CD4-positive, alpha-beta T cell (primary cell): ENCODE measurements at regions of chr2 and their contacts with region 1.

Region 1: DNA sequence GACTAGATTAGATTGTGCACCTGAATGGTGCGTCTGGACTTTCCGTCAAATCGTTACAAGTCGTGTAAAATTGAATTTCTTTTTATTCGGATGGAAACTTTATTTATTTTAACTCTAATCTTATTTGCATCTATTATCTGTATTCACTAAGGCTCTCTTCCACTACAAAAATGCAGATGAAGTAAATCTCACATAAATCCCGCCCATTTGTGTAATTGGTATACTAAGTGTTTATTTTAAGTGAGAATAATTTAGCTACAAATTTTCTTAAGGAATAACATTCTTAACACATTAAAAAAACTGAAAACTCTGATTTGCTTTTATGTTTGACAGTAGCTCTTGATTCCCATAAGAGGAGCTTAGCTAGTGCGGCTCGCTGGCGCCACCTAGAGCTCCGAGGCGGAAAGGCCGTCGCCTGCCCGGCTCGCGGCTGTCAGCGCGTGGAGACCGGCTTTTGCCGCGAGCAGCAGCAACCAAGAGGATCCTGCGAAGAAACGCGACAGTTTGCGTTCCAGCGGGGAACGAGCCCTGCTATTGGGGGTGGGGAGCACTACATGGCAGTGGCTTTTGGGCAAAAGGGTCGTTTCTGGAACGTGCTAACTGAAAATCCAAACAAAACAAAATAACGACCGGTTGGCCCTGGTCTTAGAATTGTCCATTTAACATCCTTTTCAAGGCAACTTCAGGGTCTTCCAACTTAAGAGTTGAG is 6.7 kb downstream of the SP9 start:
- DNase-seq: peak; percentile 80 to 92 (median 87)
- ATAC-seq: peak; percentile 78
- H3K4me3 ChIP-seq: no peak overlapping the region
- H3K4me3 Mint-ChIP-seq: peak overlapping the region; percentile 87
- H3K27ac ChIP-seq: no peak overlapping the region
- H3K27ac Mint-ChIP-seq: peak overlapping the region; percentile 63
- H3K4me1 ChIP-seq: peaks cover 55% of the 10 kb centered on the region
- H3K4me1 Mint-ChIP-seq: peaks cover 46% of the 10 kb centered on the region
- H3K27me3 ChIP-seq: peaks cover 60 to 87% of the 10 kb centered on the region in 2 experiments
- H3K27me3 Mint-ChIP-seq: peaks cover 82% of the 10 kb centered on the region
- CTCF ChIP-seq: peak; percentile 98

Region 2: GRCh38 chr2:173027181-173028128 is 1314.0 kb before region 1 on chr2:
- CTCF ChIA-PET with region 1: interaction called, 4 read pairs
- POLR2A ChIA-PET with region 1: no interaction called
- intact Hi-C with region 1: loop called (anchors 1 to 2 kb)
- DNase-seq: peak; percentile 41 to 88 (median 62)
- ATAC-seq: peak; percentile 86
- H3K4me3 ChIP-seq: no peak overlapping the region
- H3K4me3 Mint-ChIP-seq: no peak overlapping the region
- H3K27ac ChIP-seq: no peak overlapping the region
- H3K27ac Mint-ChIP-seq: no peak overlapping the region
- H3K4me1 ChIP-seq: no peaks in the 10 kb centered on the region
- H3K4me1 Mint-ChIP-seq: no peaks in the 10 kb centered on the region
- H3K27me3 ChIP-seq: no peaks in the 10 kb centered on the region
- H3K27me3 Mint-ChIP-seq: peaks cover 6% of the 10 kb centered on the region
- CTCF ChIP-seq: peak; percentile 96

Region 3: GRCh38 chr2:173402405-173402974 is 939.0 kb before region 1 on chr2:
- CTCF ChIA-PET with region 1: interaction called, 13 read pairs
- POLR2A ChIA-PET with region 1: interaction called, 6 read pairs
- intact Hi-C with region 1: loop called (anchors 1 kb)
- DNase-seq: peak; percentile 49 to 83 (median 63)
- ATAC-seq: peak; percentile 74
- H3K4me3 ChIP-seq: no peak overlapping the region
- H3K4me3 Mint-ChIP-seq: no peak overlapping the region
- H3K27ac ChIP-seq: no peak overlapping the region
- H3K27ac Mint-ChIP-seq: no peak overlapping the region
- H3K4me1 ChIP-seq: peaks cover 5% of the 10 kb centered on the region
- H3K4me1 Mint-ChIP-seq: peaks cover 5% of the 10 kb centered on the region
- H3K27me3 ChIP-seq: peaks cover 22 to 61% of the 10 kb centered on the region in 2 experiments
- H3K27me3 Mint-ChIP-seq: peaks cover 67% of the 10 kb centered on the region
- CTCF ChIP-seq: peak; percentile 87

Region 4: GRCh38 chr2:173884025-173884802 is 457.2 kb before region 1 on chr2:
- CTCF ChIA-PET with region 1: no interaction called
- POLR2A ChIA-PET with region 1: no interaction called
- intact Hi-C with region 1: loop called (anchors 1 to 2 kb)
- DNase-seq: peak in 12 of 14 experiments; percentile 3 to 59 (median 25)
- ATAC-seq: no peak
- H3K4me3 ChIP-seq: no peak overlapping the region
- H3K4me3 Mint-ChIP-seq: no peak overlapping the region
- H3K27ac ChIP-seq: no peak overlapping the region
- H3K27ac Mint-ChIP-seq: no peak overlapping the region
- H3K4me1 ChIP-seq: no peaks in the 10 kb centered on the region
- H3K4me1 Mint-ChIP-seq: no peaks in the 10 kb centered on the region
- H3K27me3 ChIP-seq: peaks cover 0 to 6% of the 10 kb centered on the region in 2 experiments
- H3K27me3 Mint-ChIP-seq: peaks cover 39% of the 10 kb centered on the region
- CTCF ChIP-seq: peak; percentile 50

Region 5: GRCh38 chr2:174039551-174040416 is 301.7 kb before region 1 on chr2:
- CTCF ChIA-PET with region 1: no interaction called
- POLR2A ChIA-PET with region 1: no interaction called
- intact Hi-C with region 1: loop called in 1 of 2 experiments (anchors 10 kb)
- DNase-seq: peak; percentile 65 to 93 (median 78)
- ATAC-seq: peak; percentile 95
- H3K4me3 ChIP-seq: peak overlapping the region; percentile 44
- H3K4me3 Mint-ChIP-seq: peak overlapping the region; percentile 49
- H3K27ac ChIP-seq: peak overlapping the region; percentile 76 to 78
- H3K27ac Mint-ChIP-seq: peak overlapping the region; percentile 79
- H3K4me1 ChIP-seq: peaks cover 9% of the 10 kb centered on the region
- H3K4me1 Mint-ChIP-seq: peaks cover 9% of the 10 kb centered on the region
- H3K27me3 ChIP-seq: no peaks in the 10 kb centered on the region
- H3K27me3 Mint-ChIP-seq: peaks cover 6% of the 10 kb centered on the region
- CTCF ChIP-seq: peak; percentile 82

Region 6: DNA sequence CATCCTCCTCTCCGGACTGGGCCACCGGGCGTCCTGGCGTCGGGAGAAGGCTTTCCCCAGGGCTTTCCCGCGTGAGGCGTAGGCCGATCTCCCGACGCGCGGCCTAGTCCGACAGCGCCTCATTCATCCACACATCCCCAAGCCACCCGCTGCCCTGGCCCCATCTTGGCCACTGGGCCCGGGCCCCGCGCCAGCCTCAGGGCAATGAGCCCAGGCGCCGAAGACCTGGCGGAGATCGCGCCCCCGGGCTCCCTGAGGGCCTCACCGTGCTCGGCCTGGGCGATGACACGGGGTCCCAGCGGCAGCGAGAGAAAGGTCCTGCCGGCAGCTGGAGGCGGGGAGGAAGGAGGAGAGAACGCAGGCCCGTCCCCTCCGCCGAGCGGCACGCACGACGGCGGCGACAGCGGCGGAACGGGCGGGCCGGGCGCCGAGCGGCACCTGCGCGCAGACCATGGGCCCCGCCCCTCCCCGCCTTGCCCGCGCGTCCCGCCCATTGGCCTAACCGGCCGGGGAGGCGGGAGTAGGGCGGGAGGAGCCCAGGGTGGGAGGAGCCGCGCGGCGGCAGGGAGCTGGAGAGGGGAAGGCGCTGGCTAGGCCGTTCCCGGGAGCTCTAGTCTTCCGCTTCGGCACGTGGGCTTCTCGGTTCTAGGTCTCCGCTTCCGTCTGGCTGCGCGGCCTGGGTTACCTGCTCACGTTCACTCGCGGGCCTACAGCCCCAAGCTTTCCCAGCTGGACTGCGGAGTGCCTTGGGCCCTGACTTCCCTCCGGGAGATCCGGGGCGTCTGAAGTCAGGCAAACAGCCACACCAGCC is 93.0 kb before region 1 on chr2 and contains the start of gene OLA1:
- CTCF ChIA-PET with region 1: no interaction called
- POLR2A ChIA-PET with region 1: interaction called, 3 read pairs
- intact Hi-C with region 1: loop called (anchors 5 kb)
- DNase-seq: peak; percentile 89 to 98 (median 95)
- ATAC-seq: peak; percentile 97
- H3K4me3 ChIP-seq: peak within 1 kb of the TSS; percentile 79
- H3K4me3 Mint-ChIP-seq: peak within 1 kb of the TSS; percentile 90
- H3K27ac ChIP-seq: peak within 1 kb of the TSS; percentile 47 to 65
- H3K27ac Mint-ChIP-seq: peak within 1 kb of the TSS; percentile 73
- H3K4me1 ChIP-seq: peaks cover 21% of the 10 kb centered on the region
- H3K4me1 Mint-ChIP-seq: peaks cover 39% of the 10 kb centered on the region
- H3K27me3 ChIP-seq: no peaks in the 10 kb centered on the region
- H3K27me3 Mint-ChIP-seq: no peaks in the 10 kb centered on the region
- CTCF ChIP-seq: no peak
- total RNA-seq, gene OLA1: 38.1 to 40.5 TPM

Region 7: DNA sequence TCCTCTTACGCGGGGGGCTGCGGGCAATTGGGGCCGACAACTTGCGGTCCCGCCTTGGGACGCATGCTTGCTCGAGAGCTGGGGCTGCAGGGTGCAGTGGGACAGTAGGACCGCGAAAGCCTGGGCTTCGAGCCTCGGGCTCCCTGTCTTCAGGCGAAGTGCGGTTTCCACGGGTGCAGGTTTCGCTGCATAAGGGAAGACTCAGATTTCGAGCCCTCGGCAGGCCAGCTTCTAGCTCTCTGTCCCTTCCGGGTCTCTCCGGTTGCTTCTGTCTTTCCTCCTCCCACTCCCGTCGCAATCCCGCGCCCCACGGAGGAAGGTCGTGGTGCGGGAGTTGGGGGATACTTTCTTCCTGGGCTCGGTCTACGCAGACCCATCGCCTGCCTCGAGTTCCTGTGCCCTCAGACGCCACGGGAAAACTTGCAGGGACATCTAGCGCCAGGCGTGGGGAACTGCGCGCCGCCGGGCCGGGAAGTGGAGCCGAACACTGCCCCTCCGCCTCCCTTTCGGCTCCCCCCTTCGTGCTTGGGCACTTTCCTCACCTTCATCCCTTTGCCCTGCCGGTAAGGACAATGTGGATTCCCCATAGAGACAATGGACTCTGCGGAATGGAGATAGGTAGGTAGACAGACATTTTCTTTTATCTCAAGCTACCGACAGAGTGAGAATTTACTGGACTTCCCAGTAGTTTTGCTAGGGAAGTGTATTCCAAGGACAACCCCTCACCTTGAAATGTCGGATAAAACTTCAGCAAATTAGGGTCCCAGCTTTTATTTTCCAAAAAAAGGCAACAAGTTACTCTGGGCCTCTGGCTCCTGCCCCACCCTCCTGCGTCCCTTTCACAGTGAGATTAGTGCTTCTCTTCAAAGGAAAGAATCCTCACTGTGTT is 1746.9 kb after region 1 on chr2:
- CTCF ChIA-PET with region 1: no interaction called
- POLR2A ChIA-PET with region 1: interaction called, 3 read pairs
- intact Hi-C with region 1: loop called (anchors 5 to 10 kb)
- DNase-seq: peak in 5 of 14 experiments; percentile 23 to 56 (median 34)
- ATAC-seq: no peak
- H3K4me3 ChIP-seq: no peak overlapping the region
- H3K4me3 Mint-ChIP-seq: peak overlapping the region; percentile 72
- H3K27ac ChIP-seq: no peak overlapping the region
- H3K27ac Mint-ChIP-seq: peak overlapping the region; percentile 47
- H3K4me1 ChIP-seq: peaks cover 31% of the 10 kb centered on the region
- H3K4me1 Mint-ChIP-seq: peaks cover 36% of the 10 kb centered on the region
- H3K27me3 ChIP-seq: peaks cover 90 to 93% of the 10 kb centered on the region in 2 experiments
- H3K27me3 Mint-ChIP-seq: peaks cover 93% of the 10 kb centered on the region
- CTCF ChIP-seq: peak; percentile 24